IMR-90 (cell line): ENCODE measurements at regions of chr3 and their contacts with region 1.

Region 1: GRCh38 chr3:120742198-120742849 is at the starts of genes GTF2E1 and RABL3:
- DNase-seq: peak; percentile 100
- ATAC-seq: peak; percentile 98
- H3K4me3 ChIP-seq: peak within 1 kb of the TSS; percentile 69
- H3K27ac ChIP-seq: peak within 1 kb of the TSS; percentile 91
- H3K4me1 ChIP-seq: peaks cover 4% of the 10 kb centered on the region
- H3K27me3 ChIP-seq: no peaks in the 10 kb centered on the region
- CTCF ChIP-seq: no peak
- POLR2A ChIP-seq: peak; percentile 86
- RAD21 ChIP-seq: no peak
- total RNA-seq, gene GTF2E1: 18.5 and 26.9 TPM in 2 replicates
- total RNA-seq, gene RABL3: 17.0 and 31.1 TPM in 2 replicates

Region 2: GRCh38 chr3:120596116-120596852 is 146.0 kb before region 1 on chr3 and contains the start of gene NDUFB4:
- CTCF ChIA-PET with region 1: no interaction called
- POLR2A ChIA-PET with region 1: interaction called, 6 read pairs
- dilution Hi-C with region 1: no loop called
- in situ Hi-C with region 1: no loop called
- intact Hi-C with region 1: loop called (anchors 2 kb)
- DNase-seq: peak; percentile 99
- ATAC-seq: peak; percentile 99
- H3K4me3 ChIP-seq: peak within 1 kb of the TSS; percentile 70
- H3K27ac ChIP-seq: peak within 1 kb of the TSS; percentile 87
- H3K4me1 ChIP-seq: no peaks in the 10 kb centered on the region
- H3K27me3 ChIP-seq: no peaks in the 10 kb centered on the region
- CTCF ChIP-seq: no peak
- POLR2A ChIP-seq: peak; percentile 88
- RAD21 ChIP-seq: 0 out of 2 replicates have a peak, but pooled peaks have one; percentile 8
- total RNA-seq, gene NDUFB4: 53.9 and 62.8 TPM in 2 replicates

Region 3: GRCh38 chr3:120708408-120708807 is 33.9 kb before region 1 on chr3:
- CTCF ChIA-PET with region 1: no interaction called
- POLR2A ChIA-PET with region 1: no interaction called
- dilution Hi-C with region 1: no loop called
- in situ Hi-C with region 1: no loop called
- intact Hi-C with region 1: no loop called
- DNase-seq: no peak
- ATAC-seq: no peak
- H3K4me3 ChIP-seq: no peak overlapping the region
- H3K27ac ChIP-seq: no peak overlapping the region
- H3K4me1 ChIP-seq: peaks cover 2% of the 10 kb centered on the region
- H3K27me3 ChIP-seq: no peaks in the 10 kb centered on the region
- CTCF ChIP-seq: no peak
- POLR2A ChIP-seq: no peak
- RAD21 ChIP-seq: no peak

Region 4: DNA sequence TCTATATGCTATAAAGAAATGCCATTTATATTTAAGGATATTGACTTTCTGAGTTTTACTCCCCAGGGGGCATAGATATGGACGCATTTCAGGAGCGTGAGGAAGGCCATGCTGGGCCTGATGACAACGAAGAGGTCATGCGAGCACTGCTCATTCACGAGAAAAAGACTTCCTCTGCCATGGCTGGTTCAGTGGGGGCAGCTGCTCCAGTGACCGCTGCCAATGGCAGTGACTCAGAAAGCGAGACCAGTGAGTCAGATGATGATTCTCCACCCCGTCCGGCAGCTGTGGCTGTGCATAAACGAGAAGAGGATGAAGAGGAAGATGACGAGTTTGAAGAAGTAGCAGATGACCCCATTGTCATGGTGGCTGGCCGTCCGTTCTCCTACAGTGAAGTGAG is 38.7 kb after region 1 on chr3:
- CTCF ChIA-PET with region 1: no interaction called
- POLR2A ChIA-PET with region 1: no interaction called
- dilution Hi-C with region 1: no loop called
- in situ Hi-C with region 1: no loop called
- intact Hi-C with region 1: loop called (anchors 2 kb)
- DNase-seq: peak; percentile 93
- ATAC-seq: peak; percentile 87
- H3K4me3 ChIP-seq: peak overlapping the region; percentile 12; the same call in 1 of the 2 replicates
- H3K27ac ChIP-seq: peak overlapping the region; percentile 36
- H3K4me1 ChIP-seq: peaks cover 2% of the 10 kb centered on the region
- H3K27me3 ChIP-seq: no peaks in the 10 kb centered on the region
- CTCF ChIP-seq: no peak
- POLR2A ChIP-seq: no peak
- RAD21 ChIP-seq: 0 out of 2 replicates have a peak, but pooled peaks have one; percentile 4

Region 5: DNA sequence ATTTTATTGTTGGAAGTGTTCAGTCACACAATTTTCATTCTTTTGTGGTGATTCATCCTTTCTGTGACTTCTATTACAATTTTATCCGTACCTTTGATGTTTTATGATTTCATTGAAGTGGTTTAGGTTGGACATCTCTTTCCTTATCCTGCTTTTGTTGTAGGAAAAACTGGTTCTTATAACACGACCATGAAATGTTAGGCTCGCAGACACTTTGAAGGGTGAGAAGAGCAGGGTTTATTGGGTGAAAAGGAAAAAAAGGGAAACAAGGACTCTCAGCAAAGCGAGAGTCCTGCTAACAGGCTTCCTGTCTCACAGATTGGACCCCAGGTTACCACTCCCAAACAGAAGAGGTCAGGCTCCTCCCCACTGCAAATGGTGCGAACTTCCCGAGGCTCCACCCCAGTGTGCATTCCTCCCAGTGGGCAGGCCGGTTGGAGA is 423.1 kb after region 1 on chr3:
- CTCF ChIA-PET with region 1: no interaction called
- POLR2A ChIA-PET with region 1: no interaction called
- dilution Hi-C with region 1: no loop called
- in situ Hi-C with region 1: no loop called
- intact Hi-C with region 1: no loop called
- DNase-seq: no peak
- ATAC-seq: no peak
- H3K4me3 ChIP-seq: no peak overlapping the region
- H3K27ac ChIP-seq: no peak overlapping the region
- H3K4me1 ChIP-seq: no peaks in the 10 kb centered on the region
- H3K27me3 ChIP-seq: no peaks in the 10 kb centered on the region
- CTCF ChIP-seq: no peak
- POLR2A ChIP-seq: no peak
- RAD21 ChIP-seq: no peak

Region 6: DNA sequence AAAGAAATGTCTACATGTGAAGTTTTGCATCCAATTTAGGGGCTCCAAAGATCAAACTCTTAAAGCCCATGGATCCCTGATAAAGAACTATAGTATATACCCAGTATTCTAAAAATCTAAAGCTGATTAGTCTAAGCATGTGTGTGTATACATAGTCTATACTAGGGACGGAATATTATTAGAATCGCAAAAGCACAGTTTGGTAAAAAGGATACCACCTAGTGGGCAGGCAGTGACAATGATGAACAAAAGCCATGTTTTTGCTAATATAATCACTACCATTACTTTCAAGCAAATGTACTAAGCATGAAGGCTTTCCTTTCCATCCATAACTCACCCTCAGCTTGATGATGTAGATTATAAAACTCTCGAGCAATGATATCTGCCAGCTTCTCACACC is 787.0 kb after region 1 on chr3:
- CTCF ChIA-PET with region 1: no interaction called
- POLR2A ChIA-PET with region 1: no interaction called
- dilution Hi-C with region 1: no loop called
- in situ Hi-C with region 1: no loop called
- intact Hi-C with region 1: loop called (anchors 1 kb)
- DNase-seq: peak; percentile 35
- ATAC-seq: peak; percentile 78
- H3K4me3 ChIP-seq: no peak overlapping the region
- H3K27ac ChIP-seq: no peak overlapping the region
- H3K4me1 ChIP-seq: no peaks in the 10 kb centered on the region
- H3K27me3 ChIP-seq: no peaks in the 10 kb centered on the region
- CTCF ChIP-seq: peak; percentile 60
- POLR2A ChIP-seq: no peak
- RAD21 ChIP-seq: peak; percentile 55